ENCODE measurements at regions of chr16 and their contacts with region 1.

Region 1: GRCh38 chr16:72664509-72665225 is 383.3 kb downstream of the ZFHX3 start:
- DNase-seq: peak; percentile 94
- ATAC-seq: peak; percentile 98
- H3K4me3 ChIP-seq: peak overlapping the region; percentile 74
- H3K27ac ChIP-seq: peak overlapping the region; percentile 90
- H3K4me1 ChIP-seq: peaks cover under 1% of the 10 kb centered on the region
- H3K27me3 ChIP-seq: no peaks in the 10 kb centered on the region
- CTCF ChIP-seq: no peak
- EP300 ChIP-seq: no peak
- POLR2A ChIP-seq: peak; percentile 84
- RAD21 ChIP-seq: no peak

Region 2: DNA sequence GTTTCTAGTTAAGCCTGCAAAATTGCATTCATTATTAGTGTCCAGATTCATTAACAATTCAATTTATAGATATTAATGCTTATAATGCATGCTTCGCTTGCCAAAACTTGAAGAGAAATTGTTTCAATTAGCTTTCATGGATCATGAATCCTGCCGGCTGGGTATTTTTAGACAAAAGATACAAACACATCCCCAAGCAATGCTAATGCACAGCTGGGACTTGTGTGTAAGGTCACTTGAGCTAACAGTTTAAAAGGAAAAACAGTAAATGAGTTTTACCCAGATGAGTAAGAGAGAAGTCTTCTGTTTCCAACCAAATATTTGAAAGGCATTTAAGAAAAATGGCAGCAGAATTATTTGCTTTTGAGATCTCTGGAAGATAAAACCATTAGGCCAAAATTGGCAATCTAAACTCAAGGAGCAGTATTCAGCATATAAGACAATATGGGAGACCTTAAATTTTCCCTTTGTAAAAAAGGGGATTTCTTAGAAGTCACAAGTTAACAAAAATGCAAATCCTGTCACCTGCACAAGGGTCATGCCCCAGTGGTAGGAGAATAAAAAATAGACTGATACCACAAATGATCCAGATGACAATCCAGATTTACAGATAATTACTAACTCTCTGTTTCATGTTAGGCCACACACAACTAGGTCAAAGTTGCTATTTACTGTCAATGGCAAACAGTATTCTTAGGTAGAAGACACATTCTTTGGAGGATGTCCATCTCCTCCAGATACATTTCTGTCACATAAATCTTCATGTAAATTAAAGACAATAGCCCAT is 74.3 kb before region 1 on chr16:
- CTCF ChIA-PET with region 1: no interaction called
- POLR2A ChIA-PET with region 1: no interaction called
- RAD21 ChIA-PET with region 1: interaction called, 4 read pairs
- SMC1A ChIA-PET with region 1: interaction called, 11 read pairs
- in situ Hi-C with region 1: no loop called
- intact Hi-C with region 1: loop called (anchors 5 kb)
- DNase-seq: peak; percentile 66
- ATAC-seq: peak; percentile 92
- H3K4me3 ChIP-seq: no peak overlapping the region
- H3K27ac ChIP-seq: peak overlapping the region; percentile 74
- H3K4me1 ChIP-seq: peaks cover 26% of the 10 kb centered on the region
- H3K27me3 ChIP-seq: no peaks in the 10 kb centered on the region
- CTCF ChIP-seq: no peak
- EP300 ChIP-seq: peak; percentile 76 to 93; a peak in 3 of 4 replicates
- POLR2A ChIP-seq: no peak
- RAD21 ChIP-seq: no peak

Region 3: GRCh38 chr16:72689851-72690250 is 25.2 kb after region 1 on chr16:
- CTCF ChIA-PET with region 1: no interaction called
- POLR2A ChIA-PET with region 1: no interaction called
- RAD21 ChIA-PET with region 1: no interaction called
- SMC1A ChIA-PET with region 1: no interaction called
- in situ Hi-C with region 1: no loop called
- intact Hi-C with region 1: no loop called
- DNase-seq: no peak
- ATAC-seq: no peak
- H3K4me3 ChIP-seq: no peak overlapping the region
- H3K27ac ChIP-seq: no peak overlapping the region
- H3K4me1 ChIP-seq: no peaks in the 10 kb centered on the region
- H3K27me3 ChIP-seq: no peaks in the 10 kb centered on the region
- CTCF ChIP-seq: no peak
- EP300 ChIP-seq: no peak
- POLR2A ChIP-seq: no peak
- RAD21 ChIP-seq: no peak

Region 4: DNA sequence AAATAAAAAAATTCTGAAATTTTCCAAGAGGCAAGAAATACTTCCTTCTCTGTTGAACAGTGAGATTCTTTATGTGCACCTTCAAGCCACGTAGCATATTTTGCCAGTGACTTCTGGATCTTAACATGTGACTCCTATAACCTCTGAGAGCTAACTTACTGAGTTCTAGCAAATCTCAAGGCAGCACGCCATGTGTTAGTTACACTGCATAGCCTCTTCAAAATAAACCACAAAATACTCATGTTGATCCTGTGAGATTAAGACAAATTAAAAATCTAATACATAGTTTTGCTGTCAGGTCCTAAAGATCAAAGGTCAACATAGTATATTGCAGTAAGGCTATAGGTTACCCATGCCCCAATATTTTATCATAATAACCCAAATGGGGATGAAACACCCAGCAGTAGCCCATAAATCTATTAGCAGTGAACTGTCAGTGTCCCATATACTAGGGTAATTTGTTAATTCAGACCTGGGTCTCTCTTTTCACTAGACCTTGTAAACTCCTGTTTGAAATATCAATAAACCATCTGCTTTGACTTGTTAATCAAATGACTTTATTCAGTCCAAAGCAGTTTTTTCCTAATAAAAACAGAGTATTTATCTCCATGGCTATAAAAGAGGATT is 40.2 kb after region 1 on chr16:
- CTCF ChIA-PET with region 1: no interaction called
- POLR2A ChIA-PET with region 1: no interaction called
- RAD21 ChIA-PET with region 1: no interaction called
- SMC1A ChIA-PET with region 1: no interaction called
- in situ Hi-C with region 1: no loop called
- intact Hi-C with region 1: loop called (anchors 5 kb)
- DNase-seq: no peak
- ATAC-seq: no peak
- H3K4me3 ChIP-seq: no peak overlapping the region
- H3K27ac ChIP-seq: no peak overlapping the region
- H3K4me1 ChIP-seq: no peaks in the 10 kb centered on the region
- H3K27me3 ChIP-seq: no peaks in the 10 kb centered on the region
- CTCF ChIP-seq: no peak
- EP300 ChIP-seq: no peak
- POLR2A ChIP-seq: no peak
- RAD21 ChIP-seq: no peak

Measured in GM12878 (cell line).